ENCODE measurements at regions of chr15 and their contacts with region 1.

Region 1: DNA sequence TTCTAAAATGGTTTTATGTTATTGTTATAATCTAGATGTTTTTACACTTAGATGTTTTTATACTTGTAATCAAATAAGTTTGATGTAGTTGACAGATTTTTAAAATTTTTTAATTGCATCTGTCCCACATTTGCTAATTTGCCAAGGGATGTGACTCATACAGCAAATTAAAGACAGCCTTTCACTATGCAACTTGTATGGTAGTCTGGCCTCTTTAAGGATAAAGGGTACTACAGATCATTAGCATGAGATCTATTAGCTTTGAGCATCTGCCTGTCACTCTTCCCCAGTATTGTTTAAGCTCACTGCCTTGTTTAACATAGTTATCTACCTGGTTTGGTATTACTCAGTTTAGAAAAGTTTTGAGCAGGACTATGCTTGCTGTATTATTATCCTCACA is 83.0 kb downstream of the NPTN start:
- DNase-seq: no peak
- ATAC-seq: 0 out of 2 replicates have a peak, but pooled peaks have one; percentile 24
- H3K4me3 ChIP-seq: no peak overlapping the region
- H3K27ac ChIP-seq: no peak overlapping the region
- H3K4me1 ChIP-seq: no peaks in the 10 kb centered on the region
- H3K27me3 ChIP-seq: no peaks in the 10 kb centered on the region
- CTCF ChIP-seq: no peak
- POLR2A ChIP-seq: no peak
- RAD21 ChIP-seq: no peak

Region 2: GRCh38 chr15:73284090-73284716 is 266.0 kb before region 1 on chr15:
- CTCF ChIA-PET with region 1: no interaction called
- POLR2A ChIA-PET with region 1: no interaction called
- dilution Hi-C with region 1: no loop called
- in situ Hi-C with region 1: no loop called
- intact Hi-C with region 1: loop called (anchors 5 kb)
- DNase-seq: peak; percentile 43
- ATAC-seq: peak; percentile 86
- H3K4me3 ChIP-seq: no peak overlapping the region
- H3K27ac ChIP-seq: no peak overlapping the region
- H3K4me1 ChIP-seq: no peaks in the 10 kb centered on the region
- H3K27me3 ChIP-seq: no peaks in the 10 kb centered on the region
- CTCF ChIP-seq: peak; percentile 54
- POLR2A ChIP-seq: no peak
- RAD21 ChIP-seq: peak; percentile 57

Region 3: GRCh38 chr15:73650416-73651126 is 100.4 kb after region 1 on chr15:
- CTCF ChIA-PET with region 1: no interaction called
- POLR2A ChIA-PET with region 1: no interaction called
- dilution Hi-C with region 1: no loop called
- in situ Hi-C with region 1: no loop called
- intact Hi-C with region 1: no loop called
- DNase-seq: peak; percentile 61
- ATAC-seq: peak; percentile 37; the same call in 1 of the 2 replicates
- H3K4me3 ChIP-seq: no peak overlapping the region
- H3K27ac ChIP-seq: no peak overlapping the region
- H3K4me1 ChIP-seq: no peaks in the 10 kb centered on the region
- H3K27me3 ChIP-seq: peaks cover 9% of the 10 kb centered on the region
- CTCF ChIP-seq: no peak
- POLR2A ChIP-seq: no peak
- RAD21 ChIP-seq: no peak

Region 4: DNA sequence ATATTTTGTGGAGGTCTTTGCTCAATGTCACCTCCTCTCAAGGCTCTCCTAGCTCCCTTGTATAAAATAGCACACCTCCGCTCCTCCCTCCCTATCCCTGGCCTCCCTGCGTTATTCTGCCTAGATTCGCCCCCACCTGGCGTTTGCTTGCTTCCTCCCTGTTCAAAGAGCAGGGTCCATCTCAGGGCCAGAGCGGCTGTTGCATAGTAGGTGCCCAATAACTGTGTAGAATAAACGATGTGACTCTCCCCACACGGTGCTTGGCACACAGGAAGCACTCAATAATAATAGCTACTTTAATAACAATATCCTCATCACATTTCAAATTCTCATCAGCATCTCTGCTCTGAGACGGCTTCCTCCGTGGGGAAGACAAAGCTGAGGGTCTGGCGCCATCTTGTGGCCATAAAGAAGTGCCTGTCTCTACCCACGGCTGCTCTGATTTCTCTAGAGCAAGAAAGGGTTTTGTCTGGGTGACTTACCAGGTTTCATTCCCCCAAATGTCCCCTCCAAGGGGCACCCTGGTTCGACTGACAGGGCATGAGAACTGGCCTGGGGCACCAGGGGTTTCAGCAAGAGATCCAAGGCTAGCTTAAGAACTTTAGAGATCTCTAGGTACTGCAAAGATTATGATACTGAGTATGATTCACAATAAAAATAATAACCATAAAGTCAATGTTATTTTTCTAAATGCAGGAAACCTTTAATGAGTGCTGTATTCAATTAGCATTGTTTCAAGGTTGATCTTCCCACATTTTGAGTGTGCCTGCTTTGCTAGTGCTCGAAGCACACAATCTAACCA is 150.1 kb after region 1 on chr15:
- CTCF ChIA-PET with region 1: no interaction called
- POLR2A ChIA-PET with region 1: no interaction called
- dilution Hi-C with region 1: no loop called
- in situ Hi-C with region 1: no loop called
- intact Hi-C with region 1: no loop called
- DNase-seq: peak; percentile 75
- ATAC-seq: peak; percentile 70
- H3K4me3 ChIP-seq: no peak overlapping the region
- H3K27ac ChIP-seq: no peak overlapping the region
- H3K4me1 ChIP-seq: peaks cover 10% of the 10 kb centered on the region
- H3K27me3 ChIP-seq: no peaks in the 10 kb centered on the region
- CTCF ChIP-seq: peak; percentile 97
- POLR2A ChIP-seq: peak; percentile 34; the same call in 1 of the 2 replicates
- RAD21 ChIP-seq: peak; percentile 99